ENCODE measurements at regions of chr2 and their contacts with region 1.

Region 1: GRCh38 chr2:227388537-227389011 is 825 bp upstream of the SCYGR1 start:
- DNase-seq: no peak
- H3K4me3 ChIP-seq: no peak overlapping the region
- H3K4me3 Mint-ChIP-seq: no peak overlapping the region
- H3K27ac Mint-ChIP-seq: no peak overlapping the region
- H3K4me1 ChIP-seq: peaks cover 19% of the 10 kb centered on the region
- H3K4me1 Mint-ChIP-seq: peaks cover 14% of the 10 kb centered on the region
- H3K27me3 ChIP-seq: no peaks in the 10 kb centered on the region
- H3K27me3 Mint-ChIP-seq: no peaks in the 10 kb centered on the region
- CTCF ChIP-seq: no peak

Region 2: DNA sequence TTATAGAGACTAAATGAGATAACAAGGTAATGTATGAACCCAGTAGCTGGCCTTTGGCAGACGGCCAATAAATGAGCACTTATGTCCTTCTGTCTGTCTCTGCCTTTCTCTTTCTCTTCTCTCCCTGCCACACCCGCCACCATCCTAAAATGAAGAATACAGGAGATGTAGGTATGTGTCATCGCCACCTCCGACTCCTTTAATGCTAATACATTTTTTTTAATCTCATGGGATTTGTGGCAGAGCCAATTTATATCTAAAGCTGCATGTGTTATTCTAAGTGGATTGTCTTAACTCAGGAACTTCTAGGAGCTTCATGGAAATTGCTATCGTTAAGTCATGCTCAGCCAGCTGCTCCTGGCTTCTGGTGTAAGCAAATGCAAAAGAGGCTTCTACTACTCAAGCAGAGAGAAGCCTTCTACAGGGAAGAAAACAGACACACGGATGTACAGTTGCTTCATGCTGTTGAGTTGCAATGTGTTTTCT is 11.6 kb before region 1 on chr2:
- CTCF ChIA-PET with region 1: no interaction called
- POLR2A ChIA-PET with region 1: no interaction called
- intact Hi-C with region 1: loop called (anchors 1 kb)
- DNase-seq: no peak
- H3K4me3 ChIP-seq: no peak overlapping the region
- H3K4me3 Mint-ChIP-seq: no peak overlapping the region
- H3K27ac Mint-ChIP-seq: no peak overlapping the region
- H3K4me1 ChIP-seq: peaks cover 16% of the 10 kb centered on the region
- H3K4me1 Mint-ChIP-seq: peaks cover 24% of the 10 kb centered on the region
- H3K27me3 ChIP-seq: no peaks in the 10 kb centered on the region
- H3K27me3 Mint-ChIP-seq: no peaks in the 10 kb centered on the region
- CTCF ChIP-seq: no peak

Region 3: DNA sequence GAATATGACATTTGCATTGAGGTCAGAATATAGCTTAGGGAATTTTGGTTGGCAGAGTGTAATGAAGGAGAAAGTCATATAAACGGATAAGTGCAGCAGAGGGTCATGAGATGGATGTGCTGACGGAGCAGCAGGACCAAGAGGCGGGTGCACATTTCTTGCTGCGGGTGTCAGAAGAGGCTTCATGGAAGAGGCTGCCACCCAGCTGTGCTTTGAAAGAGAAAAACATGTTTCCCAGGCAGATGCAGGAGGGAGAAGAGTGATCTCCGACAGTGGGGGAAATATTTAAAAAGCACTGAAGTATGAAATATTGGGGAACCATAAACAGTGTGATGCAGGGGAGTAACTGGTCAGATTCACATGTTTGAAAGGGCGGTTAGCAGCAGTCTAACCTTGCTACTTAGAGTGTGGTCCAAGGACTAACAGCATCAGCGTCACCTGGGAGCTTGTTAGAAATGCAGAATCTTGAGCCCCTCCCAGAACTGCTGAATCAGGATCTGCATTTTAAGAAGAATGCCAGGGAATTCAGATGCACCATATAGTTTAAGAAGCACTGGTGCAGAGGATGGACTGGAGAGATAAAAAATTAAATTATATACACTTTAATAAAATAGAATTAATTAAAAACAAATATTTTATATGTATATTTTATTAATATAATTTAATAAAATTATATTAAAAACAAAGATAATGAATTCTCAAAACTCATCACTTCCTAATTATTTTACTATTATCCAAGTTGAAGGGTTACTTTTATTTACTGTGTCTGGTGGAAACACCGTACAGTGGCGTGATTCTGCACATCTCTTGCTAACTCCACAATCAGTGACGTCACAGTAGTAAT is 35.3 kb after region 1 on chr2:
- CTCF ChIA-PET with region 1: no interaction called
- POLR2A ChIA-PET with region 1: no interaction called
- intact Hi-C with region 1: no loop called
- DNase-seq: no peak
- H3K4me3 ChIP-seq: no peak overlapping the region
- H3K4me3 Mint-ChIP-seq: no peak overlapping the region
- H3K27ac Mint-ChIP-seq: no peak overlapping the region
- H3K4me1 ChIP-seq: no peaks in the 10 kb centered on the region
- H3K4me1 Mint-ChIP-seq: no peaks in the 10 kb centered on the region
- H3K27me3 ChIP-seq: no peaks in the 10 kb centered on the region
- H3K27me3 Mint-ChIP-seq: no peaks in the 10 kb centered on the region
- CTCF ChIP-seq: no peak

Region 4: GRCh38 chr2:227597998-227598397 is 209.4 kb after region 1 on chr2:
- CTCF ChIA-PET with region 1: no interaction called
- POLR2A ChIA-PET with region 1: no interaction called
- intact Hi-C with region 1: no loop called
- DNase-seq: no peak
- H3K4me3 ChIP-seq: no peak overlapping the region
- H3K4me3 Mint-ChIP-seq: no peak overlapping the region
- H3K27ac Mint-ChIP-seq: no peak overlapping the region
- H3K4me1 ChIP-seq: no peaks in the 10 kb centered on the region
- H3K4me1 Mint-ChIP-seq: no peaks in the 10 kb centered on the region
- H3K27me3 ChIP-seq: no peaks in the 10 kb centered on the region
- H3K27me3 Mint-ChIP-seq: no peaks in the 10 kb centered on the region
- CTCF ChIP-seq: no peak